PC-9 (cell line): ENCODE measurements at regions of chr4 and their contacts with region 1.

Region 1: DNA sequence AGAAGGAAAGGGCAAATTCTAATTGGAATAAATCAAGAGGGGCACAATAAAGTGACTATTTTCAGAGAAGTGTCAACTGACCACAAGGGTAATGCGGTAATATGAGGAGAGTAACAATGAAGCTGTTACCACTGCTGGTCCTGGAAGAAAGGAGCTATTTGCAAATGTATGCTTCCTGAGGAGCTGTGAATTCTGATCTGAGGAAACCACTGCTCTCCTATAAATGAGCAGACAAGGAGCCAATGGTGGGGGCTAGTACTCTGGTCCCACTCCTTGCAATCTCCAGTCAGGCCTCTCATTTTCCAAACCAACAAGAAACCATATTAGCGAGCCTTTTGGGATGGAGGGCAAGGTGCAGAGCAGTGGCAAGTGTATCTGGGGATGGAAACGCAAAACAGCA is 770.2 kb downstream of the FSTL5 start:
- DNase-seq: no peak
- H3K4me3 ChIP-seq: no peak overlapping the region
- H3K27ac ChIP-seq: no peak overlapping the region
- H3K4me1 ChIP-seq: no peaks in the 10 kb centered on the region
- H3K27me3 ChIP-seq: no peaks in the 10 kb centered on the region
- CTCF ChIP-seq: no peak

Region 2: GRCh38 chr4:161376275-161376674 is 17.3 kb before region 1 on chr4:
- CTCF ChIA-PET with region 1: no interaction called
- POLR2A ChIA-PET with region 1: no interaction called
- intact Hi-C with region 1: no loop called
- DNase-seq: peak in 1 of 2 experiments; percentile 40
- H3K4me3 ChIP-seq: no peak overlapping the region
- H3K27ac ChIP-seq: no peak overlapping the region
- H3K4me1 ChIP-seq: peaks cover 8% of the 10 kb centered on the region; the same call in 1 of the 2 replicates
- H3K27me3 ChIP-seq: no peaks in the 10 kb centered on the region
- CTCF ChIP-seq: no peak

Region 3: DNA sequence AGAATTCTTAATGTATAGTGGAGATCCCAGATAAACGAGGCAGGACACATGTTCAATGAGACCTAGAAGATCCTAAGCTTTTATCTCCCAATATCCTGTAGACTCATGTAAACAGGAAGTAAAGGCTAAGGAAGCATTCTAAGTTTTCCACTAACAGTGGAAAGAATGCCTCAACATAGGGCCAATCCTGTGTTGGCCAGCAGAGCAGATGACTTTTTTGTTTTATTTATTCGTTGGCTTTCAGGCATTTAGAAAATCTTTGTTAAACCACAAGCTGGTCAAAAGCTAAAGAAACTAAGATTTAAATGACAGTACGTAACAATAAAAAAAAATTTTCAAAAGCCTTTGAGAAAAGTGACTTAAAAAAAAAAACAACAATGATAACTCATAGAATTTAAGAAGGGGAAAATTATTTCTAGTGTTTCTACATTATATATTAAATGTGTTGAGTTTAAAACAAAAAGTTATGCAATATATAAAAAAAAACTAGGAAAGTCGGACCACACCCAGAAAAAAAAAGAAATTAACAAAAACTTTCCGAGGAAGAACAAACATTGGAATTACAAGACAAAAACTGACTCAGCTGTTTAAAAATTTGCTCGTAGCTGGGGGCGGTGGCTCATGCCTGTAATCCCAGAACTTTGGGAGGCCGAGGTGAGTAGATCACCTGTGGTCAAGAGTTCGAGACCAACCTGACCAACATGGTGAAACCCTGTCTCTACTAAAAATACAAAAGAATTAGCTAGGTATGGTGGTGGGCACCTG is 10.9 kb after region 1 on chr4:
- CTCF ChIA-PET with region 1: no interaction called
- POLR2A ChIA-PET with region 1: interaction called, 16 read pairs
- intact Hi-C with region 1: no loop called
- DNase-seq: no peak
- H3K4me3 ChIP-seq: no peak overlapping the region
- H3K27ac ChIP-seq: no peak overlapping the region
- H3K4me1 ChIP-seq: no peaks in the 10 kb centered on the region
- H3K27me3 ChIP-seq: no peaks in the 10 kb centered on the region
- CTCF ChIP-seq: no peak

Region 4: GRCh38 chr4:161522031-161522430 is 128.4 kb after region 1 on chr4:
- CTCF ChIA-PET with region 1: no interaction called
- POLR2A ChIA-PET with region 1: no interaction called
- intact Hi-C with region 1: no loop called
- DNase-seq: no peak
- H3K4me3 ChIP-seq: no peak overlapping the region
- H3K27ac ChIP-seq: no peak overlapping the region
- H3K4me1 ChIP-seq: no peaks in the 10 kb centered on the region
- H3K27me3 ChIP-seq: no peaks in the 10 kb centered on the region
- CTCF ChIP-seq: no peak